ENCODE measurements at regions of chr7 and their contacts with region 1.

Region 1: GRCh38 chr7:116591202-116592040 is 66.6 kb downstream of the CAV1 start:
- DNase-seq: no peak
- ATAC-seq: peak; percentile 57

Region 2: GRCh38 chr7:116173051-116174028 is 418.1 kb before region 1 on chr7:
- intact Hi-C with region 1: loop called (anchors 5 kb)
- DNase-seq: no peak
- ATAC-seq: peak; percentile 71

Region 3: GRCh38 chr7:116258734-116259133 is 332.7 kb before region 1 on chr7:
- intact Hi-C with region 1: loop called (anchors 2 kb)
- DNase-seq: no peak
- ATAC-seq: peak; percentile 71

Region 4: GRCh38 chr7:116671681-116672595 is 80.5 kb after region 1 on chr7 and contains the start of gene MET:
- intact Hi-C with region 1: loop called (anchors 10 kb)
- DNase-seq: peak; percentile 78
- ATAC-seq: peak; percentile 92
- total RNA-seq, gene MET: 14.3 TPM

Region 5: DNA sequence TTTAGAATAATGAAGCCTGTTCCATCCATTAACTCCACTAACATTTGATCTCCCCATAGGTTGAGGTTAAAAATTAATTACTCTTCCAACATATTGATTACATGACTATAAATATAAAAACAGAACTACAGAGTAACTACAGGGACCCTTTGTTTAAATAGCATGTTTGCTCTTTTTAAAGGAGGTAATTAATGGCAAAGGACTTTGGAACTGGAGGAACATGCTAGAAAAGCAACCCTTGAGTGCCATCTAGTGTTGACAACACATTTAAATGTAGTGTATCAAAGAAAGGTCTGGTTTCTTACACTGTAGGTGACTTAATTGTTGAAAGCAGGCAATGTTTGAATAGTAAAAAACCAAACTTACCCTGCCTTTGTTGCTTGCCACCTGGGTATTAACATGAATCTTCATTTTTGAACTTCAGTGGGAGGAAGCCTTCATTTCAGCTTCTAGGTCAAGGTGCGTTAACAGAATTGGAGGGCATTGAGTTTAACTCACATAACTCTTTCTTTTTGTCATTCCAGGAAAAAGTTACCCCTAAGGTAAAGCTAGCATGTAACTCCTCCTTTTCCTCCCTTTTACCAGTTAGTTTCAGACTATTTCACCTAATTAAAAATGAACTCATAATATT is 218.3 kb after region 1 on chr7:
- intact Hi-C with region 1: loop called (anchors 2 kb)
- DNase-seq: no peak
- ATAC-seq: peak; percentile 80

Measured in Right ventricle myocardium superior (tissue), 1 donor.